Testis (tissue), 5 donors: ENCODE measurements at regions of chr9 and their contacts with region 1.

Region 1: DNA sequence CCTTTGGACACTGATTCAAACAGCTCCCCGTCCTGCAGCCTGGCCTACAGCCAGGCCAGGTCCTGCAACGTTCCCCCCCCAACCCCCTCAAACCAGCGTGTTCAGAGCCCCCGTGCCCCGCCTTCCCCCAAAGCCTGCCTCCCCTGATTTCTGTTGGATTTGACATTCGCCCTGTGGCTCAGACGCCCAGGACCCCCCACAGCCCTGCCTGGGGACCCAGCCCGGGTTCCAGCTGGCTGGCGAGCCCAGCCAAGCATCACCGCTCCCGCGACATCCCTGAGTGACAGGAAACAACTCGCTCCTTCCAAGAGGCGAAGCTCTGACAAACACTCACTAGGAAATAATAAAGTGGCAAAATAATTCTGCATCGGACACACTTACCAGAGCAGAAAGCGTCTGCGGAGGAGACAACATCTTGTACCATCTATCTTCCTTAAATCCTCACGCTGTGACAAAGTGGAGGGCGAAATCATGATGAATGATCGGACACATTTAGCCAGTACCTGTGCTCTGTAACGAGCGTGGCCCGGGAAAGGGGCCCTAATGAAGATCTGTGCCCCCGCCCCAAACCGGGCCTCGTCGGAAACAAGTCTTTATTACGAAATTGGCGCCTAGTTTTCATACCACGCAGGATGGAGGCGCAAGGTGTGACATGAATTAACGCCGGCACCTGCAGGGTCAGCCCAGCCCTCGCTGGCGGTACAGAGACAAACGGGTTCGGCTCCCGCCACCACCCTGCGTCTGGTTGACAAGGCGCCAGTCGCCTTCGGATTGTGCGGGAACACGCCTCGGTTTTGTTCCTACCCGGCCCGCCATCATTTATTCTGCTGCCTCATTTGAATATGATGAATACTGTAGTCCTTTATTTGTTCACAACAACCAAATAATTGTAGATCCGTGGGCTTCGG is 91.0 kb upstream of the MVB12B start:
- DNase-seq: no peak
- H3K4me3 ChIP-seq: no peak overlapping the region
- H3K27ac ChIP-seq: no peak overlapping the region
- H3K4me1 ChIP-seq: no peaks in the 10 kb centered on the region
- H3K27me3 ChIP-seq: no peaks in the 10 kb centered on the region
- CTCF ChIP-seq: no peak
- POLR2A ChIP-seq: no peak

Region 2: DNA sequence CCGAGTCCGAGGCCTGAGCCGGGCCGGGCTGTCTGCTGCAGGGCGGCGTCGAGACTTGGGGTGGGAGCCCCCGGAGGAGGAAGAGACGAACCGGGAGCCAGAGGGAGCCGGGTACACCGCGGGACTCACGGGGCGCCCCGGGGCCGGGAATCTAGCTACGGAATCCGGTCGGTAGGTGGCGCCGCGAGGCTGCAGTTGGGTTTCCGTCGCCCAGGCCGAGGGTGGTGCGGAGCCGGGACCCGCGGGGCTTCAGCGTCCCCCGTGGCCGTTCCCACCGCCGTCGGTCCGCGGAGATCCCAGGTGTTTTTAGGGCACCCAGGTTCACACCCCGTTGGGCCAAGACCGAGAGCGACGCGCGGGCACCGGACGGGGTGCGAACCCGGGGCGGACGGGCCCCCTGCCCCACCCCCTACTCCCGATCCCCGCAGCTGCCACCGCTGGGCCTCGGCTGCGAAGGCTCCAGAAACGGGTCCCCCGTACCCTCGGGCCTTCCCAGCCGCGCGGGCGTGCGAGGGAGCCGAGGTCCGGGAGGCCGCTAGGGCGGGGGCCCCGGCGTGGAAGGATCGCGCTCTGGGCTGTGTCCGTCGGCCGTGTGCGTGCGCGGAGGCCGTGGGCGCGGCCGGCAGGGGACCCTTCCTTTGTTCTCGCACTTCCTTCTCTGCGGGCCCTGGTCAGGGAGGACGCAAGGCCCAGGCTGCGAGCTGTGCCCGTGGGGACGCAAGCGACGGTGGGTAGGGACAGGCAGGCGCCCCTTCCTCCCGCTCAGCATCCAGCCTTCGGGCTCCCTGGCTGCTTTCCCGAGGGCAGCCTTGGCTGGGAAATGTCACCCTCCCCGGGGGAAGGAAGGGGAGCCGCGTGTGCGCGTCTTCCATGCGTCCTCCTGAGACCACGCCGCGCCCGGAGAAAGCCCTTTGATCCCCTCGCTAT is 827.4 kb before region 1 on chr9:
- intact Hi-C with region 1: loop called (anchors 5 kb)
- DNase-seq: peak; percentile 84
- H3K4me3 ChIP-seq: peak overlapping the region; percentile 60 to 68
- H3K27ac ChIP-seq: no peak overlapping the region
- H3K4me1 ChIP-seq: no peaks in the 10 kb centered on the region
- H3K27me3 ChIP-seq: no peaks in the 10 kb centered on the region
- CTCF ChIP-seq: peak; percentile 62 to 88 (median 81)
- POLR2A ChIP-seq: no peak